CD8-positive, alpha-beta memory T cell (primary cell): ENCODE measurements at regions of chr20 and their contacts with region 1.

Region 1: GRCh38 chr20:50588034-50588611 is 77.9 kb downstream of the PTPN1 start:
- DNase-seq: peak; percentile 46 to 80 (median 65)
- H3K4me3 ChIP-seq: no peak overlapping the region
- H3K4me3 Mint-ChIP-seq: no peak overlapping the region
- H3K27ac ChIP-seq: no peak overlapping the region
- H3K27ac Mint-ChIP-seq: peak overlapping the region in 4 of 8 donors; percentile 19 to 63 (median 40)
- H3K4me1 ChIP-seq: no peaks in the 10 kb centered on the region
- H3K4me1 Mint-ChIP-seq: peaks cover 0 to 1% (median 0%) of the 10 kb centered on the region in 3 donors
- H3K27me3 ChIP-seq: no peaks in the 10 kb centered on the region
- H3K27me3 Mint-ChIP-seq: peaks cover 0 to 1% of the 10 kb centered on the region in 2 donors

Region 2: DNA sequence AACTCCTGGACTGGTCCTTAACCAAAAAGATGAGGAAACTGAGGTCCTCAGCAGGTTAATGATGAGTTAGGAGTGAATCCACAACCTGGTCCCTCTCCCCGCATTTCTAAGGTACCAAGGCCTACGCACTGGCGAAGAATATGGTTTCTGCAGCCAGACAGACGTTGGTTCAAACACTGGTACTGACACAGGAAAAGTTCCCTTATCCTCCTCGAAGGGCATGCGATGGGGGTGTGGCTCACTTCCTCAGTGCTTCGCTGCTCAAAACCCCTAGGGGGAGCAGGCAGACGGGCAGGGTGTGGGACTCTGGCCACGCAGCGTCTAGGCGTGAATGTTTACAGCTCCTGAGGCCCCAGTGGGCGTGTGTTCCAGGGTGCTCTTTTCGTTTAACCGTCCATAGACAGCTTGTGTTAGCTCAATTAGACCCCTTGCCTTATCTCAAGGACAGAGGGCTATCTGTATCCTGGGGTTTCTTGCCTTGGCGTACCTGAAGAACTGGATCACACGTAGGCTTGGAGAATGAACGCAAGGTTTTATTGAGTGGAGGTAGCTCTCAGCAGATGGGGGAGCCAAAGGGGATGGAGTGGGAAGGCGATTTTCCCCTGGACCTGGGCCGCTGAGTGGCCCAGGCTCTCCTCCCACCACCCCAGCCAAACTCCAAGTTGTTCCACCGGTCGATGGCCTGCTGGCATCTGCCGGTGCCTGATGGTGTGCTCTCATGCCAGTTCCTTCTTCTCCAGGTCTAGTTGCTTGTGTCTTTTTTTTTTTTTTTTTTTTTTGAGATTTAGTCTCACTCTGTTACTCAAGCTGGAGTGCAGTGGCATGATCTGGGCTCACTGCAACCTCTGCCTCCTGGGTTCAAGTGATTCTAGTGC is 109.7 kb before region 1 on chr20:
- CTCF ChIA-PET with region 1: interaction called, 11 read pairs
- POLR2A ChIA-PET with region 1: no interaction called
- DNase-seq: peak; percentile 55 to 82 (median 59)
- H3K4me3 ChIP-seq: no peak overlapping the region
- H3K4me3 Mint-ChIP-seq: peak overlapping the region in 3 of 7 donors; percentile 45 to 65 (median 61)
- H3K27ac ChIP-seq: no peak overlapping the region
- H3K27ac Mint-ChIP-seq: peak overlapping the region in 3 of 8 donors; percentile 38 to 88 (median 41)
- H3K4me1 ChIP-seq: peaks cover 15% of the 10 kb centered on the region
- H3K4me1 Mint-ChIP-seq: peaks cover 11 to 25% (median 17%) of the 10 kb centered on the region in 3 donors
- H3K27me3 ChIP-seq: no peaks in the 10 kb centered on the region
- H3K27me3 Mint-ChIP-seq: peaks cover under 1 to 2% of the 10 kb centered on the region in 2 donors

Region 3: DNA sequence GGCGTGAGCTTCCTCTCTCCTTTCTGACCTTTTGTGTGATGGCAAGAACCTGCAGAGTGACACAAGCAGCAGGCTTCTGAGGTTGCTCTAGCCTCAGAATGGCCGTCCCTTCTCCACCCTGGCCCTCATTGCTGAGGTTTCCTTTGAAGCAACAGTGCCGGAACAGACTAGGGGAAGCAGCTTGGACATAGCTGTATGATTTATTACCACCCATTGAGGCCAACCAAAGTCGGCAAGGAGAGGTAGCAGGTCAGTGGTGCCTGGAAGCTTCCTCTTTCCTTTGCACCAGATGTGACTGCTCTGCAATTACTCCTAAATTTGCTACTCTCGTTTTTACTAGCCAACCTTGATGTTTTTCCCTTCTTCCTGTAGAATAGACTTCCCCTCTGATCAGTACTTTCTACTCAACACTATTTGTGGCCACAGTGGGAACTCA is 46.5 kb before region 1 on chr20:
- CTCF ChIA-PET with region 1: no interaction called
- POLR2A ChIA-PET with region 1: no interaction called
- DNase-seq: no peak
- H3K4me3 ChIP-seq: no peak overlapping the region
- H3K4me3 Mint-ChIP-seq: peak overlapping the region in 4 of 7 donors; percentile 19 to 27 (median 25)
- H3K27ac ChIP-seq: no peak overlapping the region
- H3K27ac Mint-ChIP-seq: peak overlapping the region in 6 of 8 donors; percentile 7 to 49 (median 19)
- H3K4me1 ChIP-seq: peaks cover 61% of the 10 kb centered on the region
- H3K4me1 Mint-ChIP-seq: peaks cover 74 to 85% (median 85%) of the 10 kb centered on the region in 3 donors
- H3K27me3 ChIP-seq: no peaks in the 10 kb centered on the region
- H3K27me3 Mint-ChIP-seq: no peaks in the 10 kb centered on the region

Region 4: DNA sequence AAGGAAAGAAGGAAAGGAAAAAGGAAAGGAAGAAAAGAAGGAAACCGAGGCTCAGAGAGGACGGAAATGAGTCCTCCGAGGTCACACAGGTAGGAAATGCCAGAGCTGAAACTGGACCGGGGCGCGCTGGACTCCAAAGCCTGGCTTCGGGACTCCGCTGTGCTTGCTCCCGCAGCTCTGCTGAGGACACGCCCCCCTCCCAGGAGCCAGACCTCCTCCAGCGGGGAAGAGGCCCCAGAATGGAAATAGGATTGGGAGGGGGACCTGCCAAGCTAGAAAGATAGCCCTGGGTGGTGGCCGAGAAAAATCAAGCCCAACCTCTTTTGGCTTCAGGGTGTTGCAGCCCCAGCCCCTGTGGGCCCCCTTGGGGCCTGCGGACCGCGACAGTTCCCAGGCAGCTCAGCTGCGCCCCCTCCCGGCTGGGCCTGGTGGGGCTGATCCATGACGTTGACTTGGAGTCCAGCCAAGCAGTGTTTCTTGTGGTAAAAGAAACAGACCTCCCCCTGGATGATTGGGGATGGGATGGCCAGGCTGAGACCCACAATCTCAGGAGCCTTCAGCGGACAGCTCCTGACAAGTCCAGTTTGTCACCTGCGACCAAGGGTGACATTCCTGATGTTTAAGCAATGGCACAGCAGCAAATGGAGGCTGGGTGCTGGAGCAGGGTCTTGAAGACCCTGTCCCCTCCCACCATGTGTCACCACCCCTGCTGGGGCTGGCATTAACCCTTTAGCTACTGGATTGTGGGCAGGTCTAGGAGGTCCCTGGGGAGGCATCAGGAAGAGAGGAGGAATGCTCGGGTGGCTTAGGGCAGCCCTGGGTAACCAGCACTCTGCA is 47.8 kb after region 1 on chr20:
- CTCF ChIA-PET with region 1: no interaction called
- POLR2A ChIA-PET with region 1: no interaction called
- DNase-seq: peak; percentile 23 to 58 (median 28)
- H3K4me3 ChIP-seq: no peak overlapping the region
- H3K4me3 Mint-ChIP-seq: no peak overlapping the region
- H3K27ac ChIP-seq: no peak overlapping the region
- H3K27ac Mint-ChIP-seq: peak overlapping the region in 1 of 8 donors; percentile 34
- H3K4me1 ChIP-seq: no peaks in the 10 kb centered on the region
- H3K4me1 Mint-ChIP-seq: peaks cover 0 to 3% (median 0%) of the 10 kb centered on the region in 3 donors
- H3K27me3 ChIP-seq: no peaks in the 10 kb centered on the region
- H3K27me3 Mint-ChIP-seq: peaks cover 2 to 3% of the 10 kb centered on the region in 2 donors